ENCODE measurements at regions of chr2 and their contacts with region 1.

Region 1: DNA sequence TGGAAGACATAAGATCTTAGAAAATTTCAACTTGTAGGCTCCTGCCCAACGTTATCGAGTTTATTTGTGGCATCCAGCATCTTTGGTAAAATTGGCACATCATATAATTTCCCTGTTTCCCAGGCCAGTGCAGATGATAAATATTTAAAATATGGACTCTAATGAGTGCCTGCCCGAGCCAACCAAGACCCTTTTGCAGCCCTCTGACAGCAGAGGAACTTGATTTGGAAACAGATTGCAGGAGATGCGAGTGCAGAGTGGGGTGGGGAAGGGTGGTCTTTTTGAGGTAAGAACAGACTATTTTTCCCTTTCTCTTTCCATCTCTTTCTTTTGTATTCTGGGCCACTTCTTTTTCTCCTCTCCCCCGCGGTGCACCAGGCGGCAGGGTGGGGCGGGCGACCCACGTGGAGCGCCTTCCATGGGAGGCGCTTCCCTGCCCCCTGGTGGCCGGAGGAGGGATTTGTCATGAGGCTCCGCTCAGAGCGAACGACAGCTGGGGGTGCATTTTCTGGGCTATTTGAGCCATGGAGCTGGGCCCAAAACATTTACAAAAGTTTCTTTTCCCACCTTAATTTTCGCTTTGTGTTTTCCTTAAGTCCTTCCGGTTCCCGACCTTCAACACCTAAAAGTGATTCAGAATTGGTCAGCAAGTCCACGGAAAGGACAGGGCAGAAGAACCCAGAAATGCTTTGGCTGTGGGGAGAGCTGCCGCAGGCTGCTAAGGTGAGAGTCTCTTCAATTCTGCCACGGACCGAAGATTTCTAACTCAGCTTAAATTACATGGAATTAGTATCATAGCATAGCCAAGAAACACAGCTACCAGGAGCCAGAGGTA is 32.7 kb downstream of the LPIN1 start:
- DNase-seq: peak; percentile 66 to 92
- ATAC-seq: peak; percentile 93 to 99
- H3K4me3 ChIP-seq: no peak overlapping the region
- H3K27ac ChIP-seq: peak overlapping the region; percentile 18 to 63; a peak in 4 of 6 replicates
- H3K4me1 ChIP-seq: 0 out of 3 replicates have a peak, but pooled peaks cover 3% of the 10 kb centered on the region
- CTCF ChIP-seq: peak; percentile 99
- EP300 ChIP-seq: no peak
- POLR2A ChIP-seq: no peak
- RAD21 ChIP-seq: peak; percentile 97 to 98

Region 2: DNA sequence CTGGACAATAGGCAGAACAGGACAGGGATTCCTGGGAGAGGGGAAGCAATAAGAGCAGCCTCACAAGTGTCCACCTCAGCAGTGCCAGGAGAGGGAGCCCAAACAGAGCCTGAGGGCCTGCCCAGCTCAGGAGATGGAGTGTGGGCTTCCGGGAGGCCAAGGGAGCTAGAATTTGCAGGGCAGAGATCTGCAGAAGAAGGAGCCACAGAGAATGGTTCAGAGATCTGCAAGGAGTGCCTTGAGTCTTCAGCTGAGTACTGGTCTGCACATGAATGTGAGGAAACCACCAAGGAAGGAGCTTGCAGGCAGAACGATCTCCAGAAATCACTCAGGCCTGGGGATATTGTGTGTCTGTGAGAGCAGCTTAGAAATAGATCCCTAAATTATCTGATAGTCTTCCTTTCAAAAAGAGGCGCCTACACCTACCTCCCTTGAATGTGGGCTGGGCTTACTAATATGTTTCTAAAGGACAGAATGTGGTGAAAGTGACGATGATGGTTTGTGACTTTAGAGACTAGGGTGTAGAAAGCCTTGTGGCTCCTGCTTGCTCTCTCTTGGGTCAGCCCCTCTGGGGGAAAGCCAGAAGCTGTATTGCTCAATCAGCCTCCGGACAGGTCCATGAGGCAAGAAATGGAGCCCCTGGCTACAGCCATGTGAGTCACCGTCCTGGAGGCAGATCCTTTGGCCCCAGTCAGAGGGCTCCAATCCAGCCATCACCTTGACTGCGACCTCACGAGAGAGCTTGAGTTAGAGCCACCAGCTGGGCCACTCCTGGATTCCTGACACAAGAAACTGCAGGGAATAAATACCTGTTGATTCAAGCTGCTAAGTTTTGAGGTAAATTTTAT is 40.3 kb before region 1 on chr2:
- CTCF ChIA-PET with region 1: interaction called, 66 read pairs
- POLR2A ChIA-PET with region 1: no interaction called
- DNase-seq: peak; percentile 40 to 67
- ATAC-seq: peak; percentile 91 to 95
- H3K4me3 ChIP-seq: no peak overlapping the region
- H3K27ac ChIP-seq: peak overlapping the region; percentile 4 to 66; a peak in 4 of 6 replicates
- H3K4me1 ChIP-seq: peaks cover 27% of the 10 kb centered on the region
- CTCF ChIP-seq: peak; percentile 49
- EP300 ChIP-seq: no peak
- POLR2A ChIP-seq: no peak
- RAD21 ChIP-seq: peak; percentile 54 to 72

Region 3: GRCh38 chr2:11743846-11744553 is 35.1 kb before region 1 on chr2:
- CTCF ChIA-PET with region 1: interaction called, 66 read pairs
- POLR2A ChIA-PET with region 1: no interaction called
- DNase-seq: peak; percentile 99 to 100
- ATAC-seq: peak; percentile 87 to 96
- H3K4me3 ChIP-seq: peak overlapping the region; percentile 24; the same call in 1 of the 3 replicates
- H3K27ac ChIP-seq: peak overlapping the region; percentile 86 to 90
- H3K4me1 ChIP-seq: peaks cover 48% of the 10 kb centered on the region
- CTCF ChIP-seq: 0 out of 3 replicates have a peak, but pooled peaks have one; percentile 32
- EP300 ChIP-seq: peak in 1 of 2 experiments; percentile 44; a peak in 1 of 5 replicates
- POLR2A ChIP-seq: no peak
- RAD21 ChIP-seq: 0 out of 5 replicates have a peak, but pooled peaks of 1 of the 2 experiments have one; percentile 19

Region 4: DNA sequence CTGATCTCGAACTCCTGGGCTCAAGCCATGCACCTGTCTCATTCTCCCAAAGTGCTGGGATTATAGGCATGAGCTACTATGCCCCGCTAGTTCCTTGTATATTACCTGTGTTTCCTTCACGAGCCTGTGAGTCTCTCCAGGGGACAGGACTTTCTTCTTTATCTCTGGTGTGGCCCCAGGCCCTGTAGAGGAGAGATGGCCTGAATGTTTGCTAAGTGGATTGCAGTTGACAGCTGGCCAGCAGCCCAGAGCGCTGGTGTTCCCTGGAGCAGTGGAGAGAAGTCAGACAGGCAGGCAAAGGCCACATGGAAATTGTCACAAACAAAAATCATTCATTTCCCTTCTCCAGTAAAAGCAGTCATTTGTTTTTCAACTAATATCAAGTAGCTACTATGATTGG is 14.8 kb before region 1 on chr2:
- CTCF ChIA-PET with region 1: interaction called, 20 read pairs
- POLR2A ChIA-PET with region 1: no interaction called
- DNase-seq: no peak
- ATAC-seq: no peak
- H3K4me3 ChIP-seq: no peak overlapping the region
- H3K27ac ChIP-seq: no peak overlapping the region
- H3K4me1 ChIP-seq: peaks cover 5% of the 10 kb centered on the region; the same call in 1 of the 3 replicates
- CTCF ChIP-seq: no peak
- EP300 ChIP-seq: no peak
- POLR2A ChIP-seq: no peak
- RAD21 ChIP-seq: no peak